ENCODE measurements at regions of chr18 and their contacts with region 1.

Region 1: DNA sequence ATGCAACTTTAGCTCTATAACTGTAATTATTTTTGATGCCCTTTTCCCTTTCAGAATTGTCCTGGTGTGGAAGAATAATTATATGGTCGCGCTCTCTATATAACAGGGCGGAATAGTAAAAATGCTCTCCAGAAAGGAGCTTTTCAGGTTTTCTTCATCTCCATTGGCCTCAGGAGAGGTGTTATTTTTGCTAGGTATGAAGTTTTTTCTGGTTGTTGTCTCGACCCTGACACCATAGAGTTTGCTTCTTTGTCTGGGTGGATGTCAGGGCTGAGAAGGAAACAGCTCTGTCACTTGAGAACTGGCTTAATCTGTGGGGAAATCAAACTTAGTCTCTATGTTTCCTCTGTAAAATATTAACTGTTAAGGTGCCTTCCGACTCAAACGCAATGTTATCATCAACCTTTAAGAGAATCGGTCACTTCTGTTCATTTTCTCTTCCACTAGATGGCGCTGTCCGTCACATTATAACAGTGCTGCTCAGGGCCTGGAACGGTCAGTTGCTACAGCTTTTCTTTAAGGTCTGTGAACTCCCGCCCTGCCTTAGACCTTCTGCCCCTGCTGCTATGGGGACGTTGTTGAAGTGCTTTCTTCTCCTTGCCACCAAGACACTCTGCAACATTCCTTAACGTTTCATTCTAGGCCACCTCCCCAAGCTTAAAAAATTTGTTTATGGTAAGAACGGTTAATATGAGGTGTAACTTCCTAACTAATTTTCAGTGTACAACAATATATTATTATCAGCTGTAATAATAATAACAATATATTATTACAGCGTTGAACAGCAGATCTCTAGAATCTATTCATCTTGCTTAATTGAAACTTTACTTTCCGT is 23.8 kb upstream of the SERPINB12 start:
- DNase-seq: peak; percentile 49
- H3K4me3 ChIP-seq: no peak overlapping the region
- H3K27ac ChIP-seq: no peak overlapping the region
- H3K27me3 ChIP-seq: peaks cover 9% of the 10 kb centered on the region
- CTCF ChIP-seq: peak; percentile 68

Region 2: DNA sequence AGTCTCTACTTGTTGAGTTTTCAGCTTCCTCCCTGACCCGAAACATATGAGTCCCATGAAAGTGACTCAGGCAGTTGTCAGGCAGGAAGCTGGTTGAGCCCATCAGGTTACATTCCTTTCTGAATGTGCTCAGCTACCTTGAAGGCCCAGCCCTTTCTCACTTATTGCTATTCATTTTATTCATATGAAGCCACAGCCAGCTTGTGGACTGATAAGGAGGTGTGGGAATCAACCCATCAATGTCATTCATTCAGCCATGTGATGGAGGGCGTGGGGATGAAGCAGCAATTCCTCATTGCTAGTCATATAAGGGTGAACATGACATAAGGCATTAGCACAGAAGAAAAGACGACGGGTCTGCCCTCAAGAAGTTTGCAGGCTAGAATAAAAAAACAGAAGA is 90.8 kb before region 1 on chr18:
- CTCF ChIA-PET with region 1: no interaction called
- POLR2A ChIA-PET with region 1: no interaction called
- DNase-seq: no peak
- H3K4me3 ChIP-seq: no peak overlapping the region
- H3K27ac ChIP-seq: no peak overlapping the region
- H3K27me3 ChIP-seq: peaks cover 9% of the 10 kb centered on the region
- CTCF ChIP-seq: no peak

Region 3: GRCh38 chr18:63492851-63493250 is 25.5 kb before region 1 on chr18:
- CTCF ChIA-PET with region 1: interaction called, 10 read pairs
- POLR2A ChIA-PET with region 1: no interaction called
- DNase-seq: no peak
- H3K4me3 ChIP-seq: no peak overlapping the region
- H3K27ac ChIP-seq: no peak overlapping the region
- H3K27me3 ChIP-seq: peaks cover 8% of the 10 kb centered on the region
- CTCF ChIP-seq: no peak

Region 4: GRCh38 chr18:63553117-63553516 is 34.7 kb after region 1 on chr18:
- CTCF ChIA-PET with region 1: interaction called, 10 read pairs
- POLR2A ChIA-PET with region 1: no interaction called
- DNase-seq: peak; percentile 48
- H3K4me3 ChIP-seq: no peak overlapping the region
- H3K27ac ChIP-seq: no peak overlapping the region
- H3K27me3 ChIP-seq: peaks cover 5% of the 10 kb centered on the region
- CTCF ChIP-seq: no peak

Region 5: DNA sequence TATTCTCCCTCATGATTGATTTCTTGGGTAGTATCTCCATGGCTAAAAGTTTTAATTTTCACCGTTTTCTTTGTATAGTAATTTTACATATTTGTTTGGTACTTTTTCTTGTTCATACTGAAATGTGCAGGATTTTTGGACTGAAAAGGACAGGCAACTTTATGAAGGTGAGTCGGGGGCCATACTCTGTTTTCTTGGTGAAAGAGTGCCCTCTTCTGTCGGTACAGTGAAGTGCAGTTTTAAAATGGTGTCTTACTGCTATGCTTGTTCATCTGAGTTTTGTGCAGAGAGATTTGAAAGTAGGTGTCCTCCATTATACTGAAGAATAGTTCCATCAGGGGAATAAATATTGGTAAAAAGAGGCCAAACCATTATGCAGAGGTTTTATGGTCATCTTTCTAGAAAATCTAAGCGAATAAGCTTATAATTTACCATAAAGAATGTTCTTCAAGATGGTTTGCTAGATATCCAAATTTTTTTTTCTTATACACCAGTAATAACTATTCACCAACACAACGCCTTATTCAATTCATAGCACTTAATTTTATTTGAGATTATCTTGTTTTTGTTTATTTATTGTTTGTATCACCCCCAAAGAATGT is 60.1 kb after region 1 on chr18:
- CTCF ChIA-PET with region 1: interaction called, 238 read pairs
- POLR2A ChIA-PET with region 1: no interaction called
- DNase-seq: no peak
- H3K4me3 ChIP-seq: no peak overlapping the region
- H3K27ac ChIP-seq: no peak overlapping the region
- H3K27me3 ChIP-seq: no peaks in the 10 kb centered on the region
- CTCF ChIP-seq: peak; percentile 68

Region 6: DNA sequence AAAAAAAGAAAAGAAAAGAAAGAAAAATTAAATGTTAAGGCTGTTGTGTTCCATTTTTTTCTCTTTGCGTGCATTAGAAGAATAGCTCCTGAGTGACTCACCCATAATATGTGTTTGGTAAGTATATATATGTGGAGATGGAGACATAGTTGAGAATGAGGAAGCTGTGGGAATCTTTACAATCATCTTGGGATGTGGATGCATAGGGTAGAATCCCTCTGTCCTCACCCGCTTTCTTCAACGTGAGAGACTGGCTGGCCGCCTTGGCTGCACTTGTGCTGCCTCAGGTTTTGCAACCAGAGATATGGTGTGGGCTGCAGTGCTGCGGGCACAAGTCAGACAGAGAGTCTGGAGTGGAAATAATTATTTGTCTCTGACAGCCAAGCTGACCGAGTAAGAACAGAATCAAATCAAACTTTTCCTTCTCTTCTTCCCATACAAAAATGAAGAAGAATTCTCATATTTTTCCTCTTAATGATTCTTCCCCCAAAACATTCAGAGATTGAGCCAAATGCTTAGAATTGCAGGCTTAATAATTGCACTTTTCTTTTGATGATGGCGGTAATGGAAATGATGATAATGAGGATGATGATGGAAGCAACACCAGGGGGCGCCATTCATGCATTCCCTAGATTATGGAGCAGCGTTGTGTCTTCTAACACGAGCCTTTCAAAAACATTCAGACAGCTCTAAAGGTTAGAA is 305.3 kb after region 1 on chr18:
- CTCF ChIA-PET with region 1: interaction called, 12 read pairs
- POLR2A ChIA-PET with region 1: no interaction called
- DNase-seq: peak; percentile 51
- H3K4me3 ChIP-seq: no peak overlapping the region
- H3K27ac ChIP-seq: peak overlapping the region; percentile 71
- H3K27me3 ChIP-seq: no peaks in the 10 kb centered on the region
- CTCF ChIP-seq: peak; percentile 28; the same call in 1 of the 2 replicates

Region 7: DNA sequence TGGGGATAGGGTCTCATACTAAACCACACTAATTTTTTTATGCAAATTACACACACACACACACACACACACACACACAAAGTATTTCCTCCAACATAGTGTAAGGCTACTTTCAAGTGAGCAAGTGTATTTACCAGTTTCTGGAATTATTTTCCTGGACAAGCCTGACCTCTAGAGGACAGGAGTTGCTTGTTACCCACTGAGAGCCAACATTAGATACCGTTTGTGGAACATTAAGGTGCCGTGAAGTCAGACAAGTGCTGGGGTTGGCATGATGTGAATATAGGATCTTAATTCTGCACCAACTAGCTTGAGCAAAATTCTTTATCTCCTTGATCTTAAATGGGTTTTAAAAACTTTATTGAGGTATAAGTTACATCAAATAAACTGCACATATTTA is 329.8 kb after region 1 on chr18:
- CTCF ChIA-PET with region 1: interaction called, 272 read pairs
- POLR2A ChIA-PET with region 1: interaction called, 6 read pairs
- DNase-seq: peak; percentile 37
- H3K4me3 ChIP-seq: no peak overlapping the region
- H3K27ac ChIP-seq: no peak overlapping the region
- H3K27me3 ChIP-seq: no peaks in the 10 kb centered on the region
- CTCF ChIP-seq: peak; percentile 74

Region 8: GRCh38 chr18:63994783-63995399 is 476.5 kb after region 1 on chr18:
- CTCF ChIA-PET with region 1: interaction called, 14 read pairs
- POLR2A ChIA-PET with region 1: no interaction called
- DNase-seq: peak; percentile 34
- H3K4me3 ChIP-seq: no peak overlapping the region
- H3K27ac ChIP-seq: no peak overlapping the region
- H3K27me3 ChIP-seq: no peaks in the 10 kb centered on the region
- CTCF ChIP-seq: peak; percentile 94

Measured in AG04450 (cell line).